Right ventricle myocardium inferior (tissue), 1 donor: ENCODE measurements at regions of chr16 and their contacts with region 1.

Region 1: GRCh38 chr16:25257504-25257955 is at the start of gene ZKSCAN2:
- DNase-seq: peak; percentile 96
- ATAC-seq: peak; percentile 99
- total RNA-seq, gene ZKSCAN2: 3.8 TPM

Region 2: GRCh38 chr16:24539850-24540601 is 717.5 kb before region 1 on chr16:
- intact Hi-C with region 1: loop called (anchors 10 kb)
- DNase-seq: peak; percentile 85
- ATAC-seq: peak; percentile 61

Region 3: GRCh38 chr16:25859645-25860044 is 602.1 kb after region 1 on chr16:
- intact Hi-C with region 1: no loop called
- DNase-seq: no peak
- ATAC-seq: no peak